PC-3 (cell line): ENCODE measurements at regions of chr6 and their contacts with region 1.

Region 1: GRCh38 chr6:153210083-153210482 is 79.0 kb upstream of the RGS17 start:
- DNase-seq: no peak
- ATAC-seq: no peak
- H3K4me3 ChIP-seq: no peak overlapping the region
- H3K27ac ChIP-seq: no peak overlapping the region
- H3K4me1 ChIP-seq: no peaks in the 10 kb centered on the region
- H3K27me3 ChIP-seq: no peaks in the 10 kb centered on the region
- CTCF ChIP-seq: no peak

Region 2: DNA sequence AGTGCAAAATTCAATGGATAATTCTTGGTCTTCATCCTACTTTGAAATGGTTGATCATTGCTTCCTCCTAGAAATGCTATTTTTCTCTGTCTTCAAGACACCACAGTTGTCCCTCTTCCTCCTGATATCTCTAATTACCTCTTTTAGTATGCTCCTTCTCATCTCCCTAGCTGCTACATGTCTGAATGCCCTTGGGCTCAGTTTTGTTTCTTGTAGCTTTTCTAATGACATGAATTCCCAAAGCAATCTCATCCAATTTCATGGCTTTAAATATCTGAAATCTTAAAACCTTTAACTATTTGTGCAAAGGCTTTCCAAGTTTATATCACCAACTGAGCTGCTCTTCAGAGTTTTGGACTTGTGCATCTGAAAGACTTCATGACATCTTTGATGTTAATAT is 41.2 kb after region 1 on chr6:
- CTCF ChIA-PET with region 1: no interaction called
- POLR2A ChIA-PET with region 1: no interaction called
- intact Hi-C with region 1: loop called (anchors 2 kb)
- DNase-seq: no peak
- ATAC-seq: no peak
- H3K4me3 ChIP-seq: no peak overlapping the region
- H3K27ac ChIP-seq: no peak overlapping the region
- H3K4me1 ChIP-seq: no peaks in the 10 kb centered on the region
- H3K27me3 ChIP-seq: peaks cover 49% of the 10 kb centered on the region
- CTCF ChIP-seq: no peak

Region 3: GRCh38 chr6:153340568-153340967 is 130.5 kb after region 1 on chr6:
- CTCF ChIA-PET with region 1: no interaction called
- POLR2A ChIA-PET with region 1: no interaction called
- intact Hi-C with region 1: no loop called
- DNase-seq: no peak
- ATAC-seq: no peak
- H3K4me3 ChIP-seq: no peak overlapping the region
- H3K27ac ChIP-seq: no peak overlapping the region
- H3K4me1 ChIP-seq: no peaks in the 10 kb centered on the region
- H3K27me3 ChIP-seq: no peaks in the 10 kb centered on the region
- CTCF ChIP-seq: no peak

Region 4: DNA sequence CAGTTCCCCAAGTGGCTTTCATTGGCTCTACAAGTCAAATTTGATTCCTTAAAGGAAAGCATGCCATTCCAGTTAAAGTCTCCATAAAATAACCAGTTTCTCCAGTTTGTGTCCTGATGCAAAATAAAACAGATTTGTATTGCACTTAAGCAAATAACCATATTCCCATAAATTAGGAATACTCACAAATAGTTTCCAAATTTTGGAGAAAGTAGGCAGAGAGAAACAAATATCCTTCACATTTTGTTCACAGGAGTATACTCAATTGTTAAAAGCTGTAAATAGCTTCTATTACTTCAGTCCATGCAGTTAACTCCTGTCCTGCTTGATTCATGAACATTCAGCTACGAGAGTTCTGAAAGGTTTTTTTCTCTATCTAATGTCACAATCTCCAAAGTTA is 202.4 kb after region 1 on chr6:
- CTCF ChIA-PET with region 1: no interaction called
- POLR2A ChIA-PET with region 1: no interaction called
- intact Hi-C with region 1: no loop called
- DNase-seq: peak; percentile 35
- ATAC-seq: no peak
- H3K4me3 ChIP-seq: no peak overlapping the region
- H3K27ac ChIP-seq: no peak overlapping the region
- H3K4me1 ChIP-seq: no peaks in the 10 kb centered on the region
- H3K27me3 ChIP-seq: no peaks in the 10 kb centered on the region
- CTCF ChIP-seq: no peak